Activated CD4-positive, alpha-beta memory T cell treated with anti-CD3 and anti-CD28 coated beads for 36 hours (primary cell): ENCODE measurements at regions of chr2 and their contacts with region 1.

Region 1: GRCh38 chr2:221573430-221574230 is 1.5 kb upstream of the EPHA4 start:
- DNase-seq: peak; percentile 86
- H3K4me3 Mint-ChIP-seq: peak overlapping the region; percentile 81
- H3K27ac Mint-ChIP-seq: no peak overlapping the region
- H3K4me1 Mint-ChIP-seq: peaks cover 29% of the 10 kb centered on the region
- H3K27me3 Mint-ChIP-seq: peaks cover 35% of the 10 kb centered on the region

Region 2: GRCh38 chr2:220660277-220661155 is 913.1 kb before region 1 on chr2:
- CTCF ChIA-PET with region 1: no interaction called
- POLR2A ChIA-PET with region 1: no interaction called
- intact Hi-C with region 1: no loop called
- DNase-seq: no peak
- H3K4me3 Mint-ChIP-seq: no peak overlapping the region
- H3K27ac Mint-ChIP-seq: no peak overlapping the region
- H3K4me1 Mint-ChIP-seq: no peaks in the 10 kb centered on the region
- H3K27me3 Mint-ChIP-seq: peaks cover 3% of the 10 kb centered on the region

Region 3: GRCh38 chr2:220935789-220936321 is 637.8 kb before region 1 on chr2:
- CTCF ChIA-PET with region 1: no interaction called
- POLR2A ChIA-PET with region 1: no interaction called
- intact Hi-C with region 1: loop called (anchors 2 kb)
- DNase-seq: peak; percentile 57
- H3K4me3 Mint-ChIP-seq: no peak overlapping the region
- H3K27ac Mint-ChIP-seq: peak overlapping the region; percentile 44
- H3K4me1 Mint-ChIP-seq: peaks cover 17% of the 10 kb centered on the region
- H3K27me3 Mint-ChIP-seq: peaks cover 3% of the 10 kb centered on the region

Region 4: DNA sequence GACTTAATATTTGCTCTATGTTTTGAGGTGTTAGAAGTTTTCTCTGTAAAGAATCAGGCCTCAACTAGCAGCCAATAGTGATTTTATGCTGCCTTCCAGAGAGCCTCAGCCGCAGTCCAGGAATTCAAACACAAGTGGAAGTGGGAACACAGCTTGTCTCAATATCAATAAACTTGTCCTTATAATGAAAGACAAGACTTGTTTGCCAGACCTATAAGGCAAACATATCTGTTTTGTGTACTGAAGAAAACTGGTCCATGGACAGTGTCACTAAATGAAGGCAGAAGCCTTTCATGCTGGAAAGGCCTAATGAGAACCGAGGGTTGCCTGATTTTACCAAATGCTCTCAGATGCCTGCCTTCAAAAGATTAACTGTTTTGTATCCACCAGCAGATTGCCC is 183.7 kb before region 1 on chr2:
- CTCF ChIA-PET with region 1: no interaction called
- POLR2A ChIA-PET with region 1: no interaction called
- intact Hi-C with region 1: loop called (anchors 5 kb)
- DNase-seq: no peak
- H3K4me3 Mint-ChIP-seq: no peak overlapping the region
- H3K27ac Mint-ChIP-seq: no peak overlapping the region
- H3K4me1 Mint-ChIP-seq: peaks cover 9% of the 10 kb centered on the region
- H3K27me3 Mint-ChIP-seq: peaks cover 4% of the 10 kb centered on the region

Region 5: DNA sequence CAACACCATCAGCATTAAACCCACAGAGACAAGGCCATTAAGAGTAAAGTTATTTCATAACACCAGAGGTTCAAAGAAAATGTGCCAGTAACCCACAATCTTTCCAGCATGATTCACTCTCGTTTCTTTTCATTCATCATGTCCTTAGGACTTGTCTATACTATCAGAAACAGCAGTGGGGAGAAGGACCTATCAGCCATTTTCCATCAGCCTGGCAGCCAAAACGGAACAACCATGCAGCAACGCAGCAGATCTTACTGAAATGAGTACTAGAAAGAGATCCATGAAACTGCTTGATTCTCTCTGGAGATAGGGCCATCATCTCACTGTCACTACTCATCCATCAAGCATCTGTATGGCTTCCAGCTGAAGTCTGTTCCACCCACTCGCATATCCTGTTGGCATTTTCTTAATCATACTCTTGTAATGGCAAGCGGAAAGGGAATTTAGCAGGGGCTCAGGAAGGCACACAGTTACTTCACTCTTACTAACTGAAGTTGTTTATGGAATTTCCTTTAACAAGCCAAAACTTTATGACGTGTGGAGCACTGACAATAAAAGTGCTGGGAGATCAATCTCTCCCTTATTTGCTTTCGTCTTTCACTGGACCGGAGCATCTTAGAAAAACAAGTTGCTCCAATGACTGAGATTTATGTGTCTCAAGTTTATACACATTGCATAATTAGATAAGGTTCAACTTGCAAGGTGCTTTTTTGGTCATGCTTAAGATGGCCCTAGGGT is 71.2 kb before region 1 on chr2:
- CTCF ChIA-PET with region 1: interaction called, 9 read pairs
- POLR2A ChIA-PET with region 1: no interaction called
- intact Hi-C with region 1: loop called (anchors 1 kb)
- DNase-seq: peak; percentile 67
- H3K4me3 Mint-ChIP-seq: no peak overlapping the region
- H3K27ac Mint-ChIP-seq: peak overlapping the region; percentile 64
- H3K4me1 Mint-ChIP-seq: peaks cover 42% of the 10 kb centered on the region
- H3K27me3 Mint-ChIP-seq: no peaks in the 10 kb centered on the region

Region 6: DNA sequence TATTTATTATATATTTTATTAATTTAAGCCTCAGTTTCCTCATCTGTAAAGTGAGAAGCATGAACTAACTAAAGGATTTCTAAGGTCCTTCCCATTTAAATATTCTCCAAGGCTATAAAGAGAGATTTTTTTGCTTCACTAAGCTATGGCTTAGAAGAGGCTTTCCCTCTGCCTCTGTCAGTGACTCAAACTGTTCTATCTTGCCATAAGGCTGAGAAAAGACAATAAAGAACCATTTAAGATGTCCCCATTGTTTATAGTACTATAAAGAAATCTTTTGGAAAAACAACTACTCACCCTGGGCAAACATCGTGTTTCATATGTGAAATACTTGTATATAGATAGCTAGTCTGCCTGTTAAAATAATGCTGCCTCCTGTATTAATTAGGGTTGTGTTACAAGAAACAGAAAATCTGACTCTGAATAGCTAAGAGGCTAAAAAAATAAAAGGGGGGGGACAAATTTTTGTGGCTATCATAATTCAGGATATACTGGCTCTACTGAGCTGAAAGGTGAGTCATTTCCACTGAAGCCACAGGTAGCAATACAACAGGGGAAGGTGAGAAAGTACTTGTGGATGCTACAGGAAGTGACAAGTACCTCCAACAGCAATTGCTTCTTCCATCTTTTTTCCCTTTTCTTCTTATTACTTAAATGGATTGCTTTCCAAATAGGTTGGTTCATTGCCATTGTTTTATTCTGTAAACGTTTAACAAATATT is 27.0 kb before region 1 on chr2:
- CTCF ChIA-PET with region 1: interaction called, 3 read pairs
- POLR2A ChIA-PET with region 1: no interaction called
- intact Hi-C with region 1: loop called (anchors 2 kb)
- DNase-seq: no peak
- H3K4me3 Mint-ChIP-seq: no peak overlapping the region
- H3K27ac Mint-ChIP-seq: no peak overlapping the region
- H3K4me1 Mint-ChIP-seq: peaks cover 27% of the 10 kb centered on the region
- H3K27me3 Mint-ChIP-seq: no peaks in the 10 kb centered on the region

Region 7: DNA sequence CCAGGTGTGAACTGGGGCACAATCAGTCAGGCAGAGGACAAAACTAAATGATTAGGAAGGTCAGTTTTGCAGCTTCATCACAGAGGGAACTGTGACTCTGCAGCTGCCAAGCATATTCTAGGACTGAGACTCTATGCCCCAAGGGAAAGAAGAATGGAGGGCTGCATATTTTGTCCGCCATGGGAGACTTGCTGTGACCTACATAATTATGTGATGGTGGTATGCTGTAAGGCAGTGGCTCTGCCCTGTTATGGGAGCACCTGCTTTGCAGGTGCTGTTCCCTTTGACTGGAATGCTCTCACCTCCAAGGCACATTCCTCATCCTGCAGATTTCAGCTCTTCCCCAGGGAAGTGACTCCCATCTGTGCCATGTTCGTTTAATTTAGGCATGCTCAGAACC is 260.3 kb after region 1 on chr2:
- CTCF ChIA-PET with region 1: no interaction called
- POLR2A ChIA-PET with region 1: no interaction called
- intact Hi-C with region 1: no loop called
- DNase-seq: no peak
- H3K4me3 Mint-ChIP-seq: no peak overlapping the region
- H3K27ac Mint-ChIP-seq: no peak overlapping the region
- H3K4me1 Mint-ChIP-seq: no peaks in the 10 kb centered on the region
- H3K27me3 Mint-ChIP-seq: no peaks in the 10 kb centered on the region

Region 8: DNA sequence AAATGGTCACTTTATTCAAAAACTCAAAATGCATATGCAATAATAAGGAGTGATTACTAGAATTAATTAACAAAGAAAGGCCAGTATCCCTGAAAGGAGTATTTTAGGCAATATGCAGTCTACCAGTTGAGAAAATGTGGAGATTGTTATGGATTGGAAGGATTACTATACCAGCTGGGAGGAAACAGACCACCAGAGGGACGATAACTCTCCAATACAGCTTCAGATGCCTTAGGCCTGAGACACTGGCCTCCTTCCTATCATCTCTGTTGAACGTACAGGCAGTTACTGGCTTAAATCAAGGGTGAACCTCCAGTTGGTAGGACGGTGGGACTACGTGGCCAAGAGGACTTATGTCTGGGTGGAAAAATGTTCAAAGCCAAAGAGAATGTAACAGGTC is 334.9 kb after region 1 on chr2:
- CTCF ChIA-PET with region 1: no interaction called
- POLR2A ChIA-PET with region 1: no interaction called
- intact Hi-C with region 1: no loop called
- DNase-seq: no peak
- H3K4me3 Mint-ChIP-seq: no peak overlapping the region
- H3K27ac Mint-ChIP-seq: no peak overlapping the region
- H3K4me1 Mint-ChIP-seq: no peaks in the 10 kb centered on the region
- H3K27me3 Mint-ChIP-seq: no peaks in the 10 kb centered on the region

Region 9: DNA sequence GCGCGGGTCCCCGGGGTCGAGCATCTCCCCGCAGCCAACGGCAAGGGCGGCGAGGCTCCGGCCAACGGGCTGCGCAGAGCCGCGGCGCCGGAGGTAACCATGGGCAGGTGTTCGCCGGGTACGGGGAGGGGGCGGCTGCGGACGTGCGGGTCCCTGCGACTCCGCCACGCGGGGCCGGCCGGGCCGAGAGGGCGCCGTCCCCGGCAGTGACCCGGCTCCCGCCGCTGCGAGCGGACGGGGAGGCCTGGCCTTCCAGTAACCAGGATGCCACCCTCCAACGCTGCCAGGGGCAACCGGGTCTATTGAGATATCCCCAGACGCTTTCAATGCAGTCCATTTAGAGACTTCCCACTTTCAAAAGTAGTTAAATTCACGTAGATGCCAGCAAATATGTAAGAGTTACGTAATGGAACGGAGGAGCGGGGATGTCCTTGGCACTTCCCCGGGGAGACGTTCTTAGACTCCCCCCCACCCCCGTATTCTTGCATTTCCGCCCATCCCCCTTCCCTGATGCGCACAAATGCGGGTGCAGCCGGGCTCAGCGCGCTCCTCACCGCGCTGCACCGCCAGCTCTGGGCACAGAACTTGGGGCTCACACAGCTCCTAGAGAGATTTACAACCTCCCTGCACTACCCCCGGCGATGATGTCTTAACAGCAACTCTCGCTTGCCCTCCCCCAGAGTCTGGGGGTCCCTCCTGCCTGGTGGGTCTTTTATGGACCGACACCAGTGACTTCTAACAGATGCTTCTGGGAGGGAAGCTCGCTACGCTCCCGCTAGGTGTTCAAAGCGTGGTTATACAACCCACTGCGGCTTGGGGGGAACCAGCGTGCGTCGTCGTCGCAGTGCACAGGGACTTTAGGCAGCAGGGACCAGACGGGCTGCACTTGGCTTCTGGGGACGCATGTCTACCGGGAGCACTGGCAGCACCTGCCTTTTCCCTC is 851.4 kb after region 1 on chr2:
- CTCF ChIA-PET with region 1: no interaction called
- POLR2A ChIA-PET with region 1: no interaction called
- intact Hi-C with region 1: loop called (anchors 10 kb)
- DNase-seq: peak; percentile 72
- H3K4me3 Mint-ChIP-seq: peak overlapping the region; percentile 90
- H3K27ac Mint-ChIP-seq: peak overlapping the region; percentile 85
- H3K4me1 Mint-ChIP-seq: peaks cover 61% of the 10 kb centered on the region
- H3K27me3 Mint-ChIP-seq: peaks cover 7% of the 10 kb centered on the region